Activated CD8-positive, alpha-beta T cell treated with anti-CD3 and anti-CD28 coated beads for 36 hours (primary cell): ENCODE measurements at regions of chr11 and their contacts with region 1.

Region 1: DNA sequence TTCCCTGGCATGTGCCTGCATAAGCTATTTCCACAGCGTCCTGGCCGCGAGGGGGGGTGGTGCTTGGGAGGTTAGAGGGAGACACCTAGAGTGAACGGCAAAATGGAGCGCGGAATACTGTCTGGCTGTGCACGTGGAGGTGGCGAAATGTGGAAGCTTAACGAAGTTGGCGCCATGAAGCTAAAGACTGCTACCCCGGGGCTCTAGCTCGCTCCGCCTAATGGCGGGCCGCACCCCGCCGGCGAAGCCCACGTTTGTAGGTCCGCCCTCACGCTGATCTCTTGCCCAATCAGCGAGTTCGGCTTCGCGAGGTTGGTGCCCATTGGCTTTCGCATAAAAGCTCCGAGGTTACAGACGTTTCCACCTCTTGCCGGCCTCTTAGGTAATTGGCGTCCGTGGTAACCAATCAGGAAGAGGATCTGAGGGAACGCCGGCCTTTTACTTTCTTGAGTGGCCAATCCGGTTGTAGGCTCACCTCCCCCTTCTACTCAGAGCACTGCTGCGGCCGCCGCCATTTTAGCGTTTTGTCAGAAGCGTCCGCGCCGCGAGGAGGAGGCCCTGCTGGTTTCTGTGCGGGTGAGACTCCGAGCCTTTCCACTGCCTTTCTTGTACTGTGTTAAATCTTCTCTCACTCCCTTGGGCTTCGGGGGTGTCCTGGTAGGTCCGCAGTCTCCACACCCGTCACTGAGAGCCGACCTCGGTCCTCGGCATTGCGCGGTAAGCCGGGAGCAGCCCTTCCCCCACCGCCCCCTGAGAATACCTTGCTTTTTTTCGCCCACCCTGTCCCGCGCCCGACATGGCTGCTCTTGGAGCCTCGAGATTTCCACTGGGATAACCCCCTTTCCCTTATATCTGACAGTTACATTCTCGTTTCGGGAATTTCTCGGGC is at the start of gene RBM4:
- DNase-seq: peak; percentile 99
- ATAC-seq: peak; percentile 95
- H3K4me3 Mint-ChIP-seq: peak within 1 kb of the TSS; percentile 83
- H3K27ac Mint-ChIP-seq: peak within 1 kb of the TSS; percentile 98
- H3K4me1 Mint-ChIP-seq: peaks cover 56% of the 10 kb centered on the region
- H3K27me3 Mint-ChIP-seq: no peaks in the 10 kb centered on the region
- CTCF ChIP-seq: no peak
- total RNA-seq, gene RBM4: 108 to 114 TPM

Region 2: GRCh38 chr11:66545701-66546367 is 92.6 kb before region 1 on chr11 and contains the start of gene ZDHHC24:
- CTCF ChIA-PET with region 1: no interaction called
- POLR2A ChIA-PET with region 1: interaction called, 14 read pairs
- intact Hi-C with region 1: no loop called
- DNase-seq: peak; percentile 96
- ATAC-seq: peak; percentile 90
- H3K4me3 Mint-ChIP-seq: peak within 1 kb of the TSS; percentile 85
- H3K27ac Mint-ChIP-seq: peak within 1 kb of the TSS; percentile 83
- H3K4me1 Mint-ChIP-seq: peaks cover 17% of the 10 kb centered on the region
- H3K27me3 Mint-ChIP-seq: no peaks in the 10 kb centered on the region
- CTCF ChIP-seq: no peak
- total RNA-seq, gene ZDHHC24: 13.2 to 14.0 TPM

Region 3: GRCh38 chr11:66616379-66617154 is 21.9 kb before region 1 on chr11 and contains the start of gene RBM14:
- CTCF ChIA-PET with region 1: interaction called, 16 read pairs
- POLR2A ChIA-PET with region 1: interaction called, 558 read pairs
- intact Hi-C with region 1: loop called (anchors 2 kb)
- DNase-seq: peak; percentile 99
- ATAC-seq: peak; percentile 96
- H3K4me3 Mint-ChIP-seq: peak within 1 kb of the TSS; percentile 93
- H3K27ac Mint-ChIP-seq: peak within 1 kb of the TSS; percentile 98
- H3K4me1 Mint-ChIP-seq: peaks cover 33% of the 10 kb centered on the region
- H3K27me3 Mint-ChIP-seq: no peaks in the 10 kb centered on the region
- CTCF ChIP-seq: no peak
- total RNA-seq, gene RBM14: 153 to 159 TPM

Region 4: GRCh38 chr11:66651016-66651415 is 12.6 kb after region 1 on chr11:
- CTCF ChIA-PET with region 1: interaction called, 14 read pairs
- POLR2A ChIA-PET with region 1: interaction called, 63 read pairs
- intact Hi-C with region 1: no loop called
- DNase-seq: no peak
- ATAC-seq: peak; percentile 29
- H3K4me3 Mint-ChIP-seq: no peak overlapping the region
- H3K27ac Mint-ChIP-seq: peak overlapping the region; percentile 55
- H3K4me1 Mint-ChIP-seq: peaks cover 49% of the 10 kb centered on the region
- H3K27me3 Mint-ChIP-seq: no peaks in the 10 kb centered on the region
- CTCF ChIP-seq: no peak